Uterus (tissue), 4 donors: ENCODE measurements at regions of chr17 and their contacts with region 1.

Region 1: GRCh38 chr17:76240461-76241203 is at the start of gene RNF157:
- DNase-seq: peak; percentile 27 to 40
- H3K4me3 ChIP-seq: peak within 1 kb of the TSS; percentile 41 to 45
- H3K27ac ChIP-seq: no peak within 1 kb of the TSS
- H3K4me1 ChIP-seq: no peaks in the 10 kb centered on the region
- H3K27me3 ChIP-seq: peaks cover 0 to 4% of the 10 kb centered on the region in 2 donors
- CTCF ChIP-seq: no peak
- POLR2A ChIP-seq: peak in 1 of 2 donors; percentile 31
- total RNA-seq, gene RNF157: 0.77 to 5.7 (median 1.7) TPM

Region 2: GRCh38 chr17:76740329-76741118 is 499.9 kb after region 1 on chr17:
- intact Hi-C with region 1: loop called (anchors 10 kb)
- DNase-seq: no peak
- H3K4me3 ChIP-seq: no peak overlapping the region
- H3K27ac ChIP-seq: no peak overlapping the region
- H3K4me1 ChIP-seq: peaks cover 0 to 4% of the 10 kb centered on the region in 2 donors
- H3K27me3 ChIP-seq: no peaks in the 10 kb centered on the region
- CTCF ChIP-seq: no peak
- POLR2A ChIP-seq: no peak